Activated naive CD8-positive, alpha-beta T cell treated with anti-CD3 and anti-CD28 coated beads, Interleukin-2, amount 10 ng/mL, durations not matched to agents 7 days and 5 days (primary cell): ENCODE measurements at regions of chr2 and their contacts with region 1.

Region 1: GRCh38 chr2:65056215-65057053 is at the start of gene CEP68:
- DNase-seq: peak; percentile 93
- ATAC-seq: peak; percentile 92
- H3K4me3 Mint-ChIP-seq: peak within 1 kb of the TSS; percentile 97
- H3K27ac Mint-ChIP-seq: peak within 1 kb of the TSS; percentile 88
- H3K4me1 Mint-ChIP-seq: peaks cover 54% of the 10 kb centered on the region
- H3K27me3 Mint-ChIP-seq: peaks cover 4% of the 10 kb centered on the region
- total RNA-seq, gene CEP68: 20.9 to 22.8 TPM

Region 2: GRCh38 chr2:65129826-65130663 is 73.6 kb after region 1 on chr2 and contains the start of gene RAB1A:
- POLR2A ChIA-PET with region 1: interaction called, 21 read pairs
- DNase-seq: peak; percentile 97
- ATAC-seq: peak; percentile 97
- H3K4me3 Mint-ChIP-seq: peak within 1 kb of the TSS; percentile 100
- H3K27ac Mint-ChIP-seq: peak within 1 kb of the TSS; percentile 99
- H3K4me1 Mint-ChIP-seq: peaks cover 25% of the 10 kb centered on the region
- H3K27me3 Mint-ChIP-seq: peaks cover 2% of the 10 kb centered on the region
- total RNA-seq, gene RAB1A: 55.5 to 61.9 TPM

Region 3: GRCh38 chr2:65477590-65477989 is 421.2 kb after region 1 on chr2:
- POLR2A ChIA-PET with region 1: no interaction called
- DNase-seq: no peak
- ATAC-seq: no peak
- H3K4me3 Mint-ChIP-seq: no peak overlapping the region
- H3K27ac Mint-ChIP-seq: no peak overlapping the region
- H3K4me1 Mint-ChIP-seq: no peaks in the 10 kb centered on the region
- H3K27me3 Mint-ChIP-seq: no peaks in the 10 kb centered on the region

Region 4: DNA sequence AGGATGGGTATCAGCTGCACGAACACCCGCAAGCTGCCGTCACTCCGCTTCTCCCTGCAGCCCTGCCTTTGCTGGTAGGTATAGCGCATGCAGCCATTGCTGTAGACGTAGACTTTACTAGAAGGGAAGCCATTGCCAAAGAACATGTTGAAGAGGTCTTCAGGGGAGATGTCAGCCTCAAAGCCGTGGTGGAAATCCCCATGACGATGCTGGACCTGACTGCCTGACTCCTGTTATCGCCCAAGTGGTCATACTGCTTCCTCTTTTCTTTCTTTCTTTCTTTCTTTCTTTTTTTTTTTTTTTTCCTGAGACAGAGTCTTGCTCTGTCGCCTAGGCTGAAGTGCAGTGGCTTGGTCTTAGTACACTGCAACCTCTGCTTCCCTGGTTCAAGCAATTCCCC is 444.6 kb after region 1 on chr2:
- POLR2A ChIA-PET with region 1: no interaction called
- DNase-seq: no peak
- ATAC-seq: no peak
- H3K4me3 Mint-ChIP-seq: no peak overlapping the region
- H3K27ac Mint-ChIP-seq: no peak overlapping the region
- H3K4me1 Mint-ChIP-seq: no peaks in the 10 kb centered on the region
- H3K27me3 Mint-ChIP-seq: peaks cover 5% of the 10 kb centered on the region